K562 (cell line): ENCODE measurements at regions of chr2 and their contacts with region 1.

Region 1: DNA sequence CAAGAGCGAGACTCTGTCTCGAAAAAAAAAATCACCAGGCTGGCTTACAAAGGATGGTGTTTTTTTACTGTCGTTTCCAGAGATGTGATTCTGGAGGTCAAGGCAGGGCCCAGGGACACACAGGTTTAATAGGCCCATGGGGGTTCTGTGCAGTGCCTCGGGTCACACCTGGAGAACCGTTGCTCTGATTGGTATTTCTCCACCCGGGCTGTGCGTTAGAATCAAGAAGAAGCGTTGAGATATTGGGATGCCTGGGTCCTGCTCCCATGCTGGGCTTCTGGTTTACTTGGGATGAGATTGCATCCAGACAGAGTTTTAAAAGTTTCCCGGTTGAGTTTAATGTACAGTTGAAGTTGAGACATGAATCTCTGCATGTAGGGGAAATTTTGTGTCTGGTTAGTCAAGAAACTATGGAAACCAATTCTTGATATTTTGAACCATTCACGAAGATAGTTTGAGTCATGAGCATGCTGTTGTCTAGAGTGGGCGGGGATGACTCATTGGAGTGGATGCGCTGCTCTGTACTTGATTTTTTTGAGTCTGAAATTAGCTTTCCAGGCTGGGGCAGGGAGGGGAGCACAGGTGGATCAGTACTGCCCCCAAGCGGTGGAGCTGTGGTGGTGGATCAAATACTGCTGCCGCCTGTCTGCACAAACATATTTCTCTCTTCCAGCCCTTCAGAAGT is 50.1 kb downstream of the GREB1 start:
- DNase-seq: peak; percentile 84 to 89 (median 89)
- ATAC-seq: peak; percentile 92
- H3K4me3 ChIP-seq: no peak overlapping the region
- H3K27ac ChIP-seq: no peak overlapping the region
- H3K4me1 ChIP-seq: peaks cover 3 to 6% of the 10 kb centered on the region in 2 experiments; a peak in 3 of 5 replicates
- H3K27me3 ChIP-seq: peaks cover 26 to 86% of the 10 kb centered on the region in 2 experiments
- CTCF ChIP-seq: peak; percentile 93 to 98 (median 97)
- EP300 ChIP-seq: no peak
- POLR2A ChIP-seq: no peak
- RAD21 ChIP-seq: peak; percentile 93 to 94

Region 2: DNA sequence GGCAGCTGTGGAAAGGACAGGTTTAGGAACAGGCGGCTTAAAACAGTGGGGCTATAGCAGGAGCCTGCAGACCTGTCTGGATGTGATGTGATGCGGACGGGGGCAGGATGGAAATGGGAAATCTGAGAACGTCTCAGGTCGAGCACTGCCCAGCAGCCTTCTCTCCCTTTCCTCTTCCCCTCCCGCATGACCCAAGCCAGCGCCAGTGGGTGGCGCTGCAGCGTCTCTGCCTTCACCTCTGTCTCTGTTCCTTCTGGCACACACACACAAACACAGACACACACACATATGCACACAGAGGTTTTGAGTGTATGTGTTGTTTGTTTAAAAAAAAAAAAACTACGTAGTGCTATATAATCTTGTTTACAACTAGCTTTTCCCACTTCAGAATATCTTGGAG is 510.7 kb before region 1 on chr2:
- CTCF ChIA-PET with region 1: no interaction called
- POLR2A ChIA-PET with region 1: no interaction called
- in situ Hi-C with region 1: no loop called
- intact Hi-C with region 1: loop called (anchors 1 kb)
- DNase-seq: peak; percentile 27 to 73 (median 34)
- ATAC-seq: peak; percentile 93
- H3K4me3 ChIP-seq: no peak overlapping the region
- H3K27ac ChIP-seq: no peak overlapping the region
- H3K4me1 ChIP-seq: no peaks in the 10 kb centered on the region; a peak in 1 of 5 replicates
- H3K27me3 ChIP-seq: peaks cover 13 to 57% of the 10 kb centered on the region in 2 experiments; a peak in 4 of 5 replicates
- CTCF ChIP-seq: peak; percentile 67 to 78 (median 70)
- EP300 ChIP-seq: no peak
- POLR2A ChIP-seq: no peak
- RAD21 ChIP-seq: peak; percentile 21 to 51; a peak in 3 of 4 replicates

Region 3: GRCh38 chr2:11129598-11130449 is 454.2 kb before region 1 on chr2:
- CTCF ChIA-PET with region 1: interaction called, 15 read pairs
- POLR2A ChIA-PET with region 1: interaction called, 3 read pairs
- in situ Hi-C with region 1: loop called (anchors 5 kb)
- intact Hi-C with region 1: loop called (anchors 1 kb)
- DNase-seq: peak; percentile 85 to 94 (median 90)
- ATAC-seq: peak; percentile 94
- H3K4me3 ChIP-seq: peak overlapping the region; percentile 48
- H3K27ac ChIP-seq: no peak overlapping the region
- H3K4me1 ChIP-seq: peaks cover 16 to 24% of the 10 kb centered on the region in 2 experiments; a peak in 4 of 5 replicates
- H3K27me3 ChIP-seq: peaks cover 3 to 29% of the 10 kb centered on the region in 2 experiments; a peak in 3 of 5 replicates
- CTCF ChIP-seq: peak; percentile 56 to 74 (median 71)
- EP300 ChIP-seq: no peak
- POLR2A ChIP-seq: no peak
- RAD21 ChIP-seq: peak; percentile 66 to 78

Region 4: DNA sequence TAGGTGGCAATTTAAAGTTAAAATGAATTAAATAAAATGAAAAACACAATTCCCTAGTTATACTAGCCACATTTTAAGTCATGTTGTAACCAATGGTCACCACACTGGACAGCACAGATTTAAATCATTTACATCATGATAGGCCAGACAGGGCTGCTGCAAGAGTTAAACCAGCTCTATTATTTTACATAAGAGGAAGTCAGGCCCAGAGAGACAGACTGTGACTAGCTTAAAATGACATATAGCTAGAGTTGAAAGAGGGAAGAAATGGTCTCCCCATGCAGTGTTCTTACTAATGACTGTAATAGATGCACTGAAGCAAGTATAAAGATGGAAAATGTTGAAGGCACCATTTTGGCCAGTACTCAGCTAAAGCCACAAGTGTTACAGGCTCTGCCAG is 359.1 kb before region 1 on chr2:
- CTCF ChIA-PET with region 1: no interaction called
- POLR2A ChIA-PET with region 1: no interaction called
- in situ Hi-C with region 1: no loop called
- intact Hi-C with region 1: loop called (anchors 10 kb)
- DNase-seq: no peak
- ATAC-seq: peak; percentile 48; the same call in 2 of the 3 replicates
- H3K4me3 ChIP-seq: no peak overlapping the region
- H3K27ac ChIP-seq: no peak overlapping the region
- H3K4me1 ChIP-seq: peaks cover 5 to 6% of the 10 kb centered on the region in 2 experiments; a peak in 2 of 5 replicates
- H3K27me3 ChIP-seq: no peaks in the 10 kb centered on the region
- CTCF ChIP-seq: no peak
- EP300 ChIP-seq: no peak
- POLR2A ChIP-seq: no peak
- RAD21 ChIP-seq: no peak

Region 5: GRCh38 chr2:11417946-11418585 is 165.9 kb before region 1 on chr2:
- CTCF ChIA-PET with region 1: no interaction called
- POLR2A ChIA-PET with region 1: no interaction called
- in situ Hi-C with region 1: no loop called
- intact Hi-C with region 1: loop called (anchors 1 kb)
- DNase-seq: peak; percentile 45 to 66 (median 58)
- ATAC-seq: peak; percentile 33; the same call in 1 of the 3 replicates
- H3K4me3 ChIP-seq: no peak overlapping the region
- H3K27ac ChIP-seq: no peak overlapping the region
- H3K4me1 ChIP-seq: no peaks in the 10 kb centered on the region
- H3K27me3 ChIP-seq: no peaks in the 10 kb centered on the region
- CTCF ChIP-seq: peak; percentile 62 to 67 (median 63)
- EP300 ChIP-seq: no peak
- POLR2A ChIP-seq: no peak
- RAD21 ChIP-seq: peak in 1 of 2 experiments; percentile 57; a peak in 2 of 4 replicates

Region 6: GRCh38 chr2:11477994-11478393 is 106.0 kb before region 1 on chr2:
- CTCF ChIA-PET with region 1: interaction called, 56 read pairs
- POLR2A ChIA-PET with region 1: interaction called, 3 read pairs
- in situ Hi-C with region 1: loop called (anchors 5 kb)
- intact Hi-C with region 1: loop called (anchors 1 kb)
- DNase-seq: peak; percentile 63 to 88 (median 69)
- ATAC-seq: peak; percentile 92
- H3K4me3 ChIP-seq: no peak overlapping the region
- H3K27ac ChIP-seq: no peak overlapping the region
- H3K4me1 ChIP-seq: 0 out of 5 replicates have a peak, but pooled peaks cover 0 to under 1% of the 10 kb centered on the region in 2 experiments
- H3K27me3 ChIP-seq: peaks cover 14 to 28% of the 10 kb centered on the region in 2 experiments
- CTCF ChIP-seq: peak; percentile 82 to 89 (median 88)
- EP300 ChIP-seq: no peak
- POLR2A ChIP-seq: no peak
- RAD21 ChIP-seq: peak; percentile 87 to 93

Region 7: DNA sequence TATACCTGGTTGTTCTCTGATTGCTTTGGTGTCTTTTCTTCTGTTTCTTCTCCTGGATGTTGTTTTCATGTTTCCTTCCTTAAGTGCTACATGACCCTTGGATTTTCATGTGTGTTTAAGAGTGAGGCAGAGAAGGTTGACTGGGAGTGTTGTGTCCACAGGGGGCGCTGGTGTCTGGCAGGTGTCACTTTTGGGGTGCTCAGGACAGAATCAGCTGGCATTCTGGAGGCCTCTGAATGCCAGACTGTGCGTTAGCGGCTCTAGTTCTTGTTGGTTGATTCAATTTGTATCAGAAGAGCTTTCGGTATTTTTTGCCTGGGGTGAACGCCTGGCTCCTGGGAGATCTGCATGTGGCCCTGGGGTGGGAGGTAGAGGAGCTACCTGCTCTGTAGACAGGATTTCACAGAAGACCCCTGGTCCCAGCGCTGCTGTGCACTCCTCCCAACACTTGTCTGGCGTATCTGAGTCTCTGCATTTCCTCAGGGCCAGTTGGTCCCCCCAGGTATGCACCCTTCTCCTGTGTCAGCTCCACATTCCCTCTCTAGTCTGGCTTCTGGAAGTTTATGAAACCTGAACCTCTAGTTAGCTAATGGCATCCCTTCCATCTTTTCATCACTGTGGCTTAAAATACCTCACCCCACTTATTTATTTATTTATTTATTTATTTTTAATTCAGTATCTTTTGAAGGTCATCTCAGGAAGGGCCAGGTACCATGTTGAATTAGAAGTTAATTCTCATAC is 49.1 kb before region 1 on chr2:
- CTCF ChIA-PET with region 1: interaction called, 4 read pairs
- POLR2A ChIA-PET with region 1: interaction called, 3 read pairs
- in situ Hi-C with region 1: no loop called
- intact Hi-C with region 1: loop called (anchors 2 kb)
- DNase-seq: peak in 3 of 4 experiments; percentile 26 to 44 (median 38)
- ATAC-seq: peak; percentile 75
- H3K4me3 ChIP-seq: no peak overlapping the region
- H3K27ac ChIP-seq: no peak overlapping the region
- H3K4me1 ChIP-seq: no peaks in the 10 kb centered on the region; a peak in 1 of 5 replicates
- H3K27me3 ChIP-seq: peaks cover 31 to 56% of the 10 kb centered on the region in 2 experiments
- CTCF ChIP-seq: peak; percentile 47 to 71 (median 49); a peak in 5 of 6 replicates
- EP300 ChIP-seq: no peak
- POLR2A ChIP-seq: no peak
- RAD21 ChIP-seq: peak; percentile 10 to 39; a peak in 2 of 4 replicates

Region 8: DNA sequence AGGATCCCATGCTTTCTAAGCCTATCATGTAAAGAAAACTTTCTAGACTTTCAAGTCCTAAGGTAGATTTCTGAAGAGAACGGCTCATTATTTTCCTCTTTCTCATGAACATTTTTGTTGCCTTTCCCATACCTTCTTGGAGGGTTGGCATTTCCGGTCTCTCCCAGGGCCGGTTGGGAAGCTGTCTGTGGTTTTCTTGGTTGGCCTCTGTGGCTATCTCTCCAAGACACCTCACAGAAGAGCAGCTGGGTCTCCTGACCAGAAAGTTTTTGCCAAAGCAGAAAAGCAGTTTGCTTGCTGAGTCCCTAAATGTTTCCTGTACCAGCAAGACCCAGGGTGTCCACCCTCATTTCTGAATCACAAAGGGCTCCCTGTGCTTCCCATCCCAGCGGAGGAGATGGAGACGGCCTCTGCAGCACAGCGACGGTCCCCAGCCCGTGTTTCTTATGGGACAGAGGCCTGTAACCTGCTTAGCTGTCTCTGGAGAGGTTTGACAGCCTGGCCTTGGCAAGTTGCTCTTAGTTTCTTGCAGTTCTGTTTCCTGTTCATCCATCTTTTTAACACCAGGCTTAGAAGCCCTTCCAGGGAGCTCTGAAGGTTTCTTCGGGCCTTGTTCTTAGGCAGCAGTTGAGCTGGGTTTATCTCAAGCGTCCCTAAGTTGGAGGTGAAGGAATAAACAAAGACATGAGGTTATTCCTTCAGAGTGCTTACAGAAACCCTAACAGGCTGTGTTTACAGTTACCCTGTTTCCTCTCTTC is 10.4 kb before region 1 on chr2:
- CTCF ChIA-PET with region 1: no interaction called
- POLR2A ChIA-PET with region 1: no interaction called
- in situ Hi-C with region 1: no loop called
- intact Hi-C with region 1: no loop called
- DNase-seq: peak in 1 of 4 experiments; percentile 19
- ATAC-seq: no peak
- H3K4me3 ChIP-seq: no peak overlapping the region
- H3K27ac ChIP-seq: no peak overlapping the region
- H3K4me1 ChIP-seq: peaks cover 3 to 7% of the 10 kb centered on the region in 2 experiments; a peak in 3 of 5 replicates
- H3K27me3 ChIP-seq: peaks cover 23 to 80% of the 10 kb centered on the region in 2 experiments; a peak in 4 of 5 replicates
- CTCF ChIP-seq: no peak
- EP300 ChIP-seq: no peak
- POLR2A ChIP-seq: no peak
- RAD21 ChIP-seq: no peak

Region 9: GRCh38 chr2:11743846-11744553 is 160.0 kb after region 1 on chr2:
- CTCF ChIA-PET with region 1: no interaction called
- POLR2A ChIA-PET with region 1: no interaction called
- in situ Hi-C with region 1: no loop called
- intact Hi-C with region 1: no loop called
- DNase-seq: peak; percentile 96 to 98 (median 97)
- ATAC-seq: peak; percentile 85
- H3K4me3 ChIP-seq: peak overlapping the region; percentile 33
- H3K27ac ChIP-seq: peak overlapping the region; percentile 86
- H3K4me1 ChIP-seq: peaks cover 58 to 66% of the 10 kb centered on the region in 2 experiments; a peak in 4 of 5 replicates
- H3K27me3 ChIP-seq: no peaks in the 10 kb centered on the region
- CTCF ChIP-seq: 0 out of 6 replicates have a peak, but pooled peaks of 1 of the 3 experiments have one; percentile 15
- EP300 ChIP-seq: peak; percentile 90
- POLR2A ChIP-seq: no peak; the same call in 1 of the 2 replicates
- RAD21 ChIP-seq: no peak